ENCODE measurements at regions of chr6 and their contacts with region 1.

Region 1: DNA sequence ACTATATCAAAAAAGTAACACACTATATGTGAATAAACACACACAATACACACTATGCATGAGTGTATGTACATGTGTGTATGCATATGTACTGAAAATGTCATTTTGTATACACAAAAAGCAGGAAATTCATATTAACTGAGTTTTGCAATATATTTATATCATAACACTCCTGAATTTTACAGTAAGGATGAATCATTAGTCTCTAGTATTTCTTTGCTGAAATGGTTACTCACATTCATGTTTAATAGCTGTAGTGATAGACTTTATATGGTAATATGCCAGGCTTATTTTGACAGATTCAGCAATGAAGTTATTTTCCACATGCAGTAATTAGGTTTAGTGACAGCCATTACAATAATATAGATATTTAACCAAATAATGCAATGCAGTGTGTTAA is 1216.2 kb upstream of the CITED2 start:
- DNase-seq: no peak
- ATAC-seq: no peak
- H3K4me3 ChIP-seq: no peak overlapping the region
- H3K4me3 Mint-ChIP-seq: no peak overlapping the region
- H3K27ac ChIP-seq: no peak overlapping the region
- H3K27ac Mint-ChIP-seq: no peak overlapping the region
- H3K4me1 ChIP-seq: no peaks in the 10 kb centered on the region
- H3K4me1 Mint-ChIP-seq: no peaks in the 10 kb centered on the region
- H3K27me3 ChIP-seq: no peaks in the 10 kb centered on the region
- H3K27me3 Mint-ChIP-seq: no peaks in the 10 kb centered on the region
- CTCF ChIP-seq: no peak

Region 2: DNA sequence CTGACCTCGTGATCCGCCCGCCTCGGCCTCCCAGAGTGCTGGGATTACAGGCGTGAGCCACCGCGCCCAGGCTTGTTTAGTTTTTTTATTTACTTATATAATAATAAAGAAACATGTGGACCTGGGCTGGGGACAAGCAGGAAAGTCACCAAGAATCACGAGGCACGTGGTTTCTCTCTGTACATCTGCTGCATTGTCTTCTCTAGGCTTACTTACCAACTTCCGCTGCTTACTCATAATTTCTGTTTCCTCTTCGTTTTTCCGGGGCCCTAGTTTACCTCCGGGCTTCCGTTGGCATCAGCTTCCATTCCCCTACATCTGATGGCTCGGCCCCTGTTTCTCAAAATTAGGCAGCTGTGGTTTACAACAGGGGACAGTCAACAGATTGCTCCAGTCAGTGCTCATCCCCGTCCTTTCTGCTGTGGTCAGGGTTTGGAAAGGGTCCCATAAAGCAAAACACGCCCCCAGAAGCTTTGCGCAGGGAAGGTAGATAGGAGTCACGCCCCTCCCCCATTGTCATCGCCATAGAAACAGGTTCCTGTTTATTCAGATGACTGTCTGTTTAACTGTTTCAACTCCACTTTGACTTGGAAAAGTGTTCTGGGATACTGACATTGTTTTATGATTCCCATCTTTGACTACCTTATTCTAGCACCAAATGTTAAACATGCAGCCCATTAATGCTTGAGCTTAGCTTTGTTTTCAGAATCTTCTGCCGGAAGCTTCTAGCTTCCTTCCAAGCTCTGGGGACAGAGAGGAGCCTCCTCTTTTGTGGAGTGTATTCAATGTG is 1266.9 kb before region 1 on chr6:
- CTCF ChIA-PET with region 1: no interaction called
- POLR2A ChIA-PET with region 1: no interaction called
- intact Hi-C with region 1: no loop called
- DNase-seq: peak; percentile 88
- ATAC-seq: peak; percentile 74
- H3K4me3 ChIP-seq: peak overlapping the region; percentile 56 to 81 (median 67)
- H3K4me3 Mint-ChIP-seq: peak overlapping the region; percentile 92
- H3K27ac ChIP-seq: peak overlapping the region; percentile 83 to 92
- H3K27ac Mint-ChIP-seq: peak overlapping the region; percentile 98
- H3K4me1 ChIP-seq: peaks cover 30 to 42% of the 10 kb centered on the region in 2 donors
- H3K4me1 Mint-ChIP-seq: peaks cover 37% of the 10 kb centered on the region
- H3K27me3 ChIP-seq: no peaks in the 10 kb centered on the region
- H3K27me3 Mint-ChIP-seq: no peaks in the 10 kb centered on the region
- CTCF ChIP-seq: no peak

Region 3: GRCh38 chr6:139895205-139895793 is 695.3 kb before region 1 on chr6:
- CTCF ChIA-PET with region 1: no interaction called
- POLR2A ChIA-PET with region 1: no interaction called
- intact Hi-C with region 1: no loop called
- DNase-seq: no peak
- ATAC-seq: no peak
- H3K4me3 ChIP-seq: no peak overlapping the region
- H3K4me3 Mint-ChIP-seq: no peak overlapping the region
- H3K27ac ChIP-seq: no peak overlapping the region
- H3K27ac Mint-ChIP-seq: no peak overlapping the region
- H3K4me1 ChIP-seq: no peaks in the 10 kb centered on the region
- H3K4me1 Mint-ChIP-seq: no peaks in the 10 kb centered on the region
- H3K27me3 ChIP-seq: no peaks in the 10 kb centered on the region
- H3K27me3 Mint-ChIP-seq: peaks cover 10% of the 10 kb centered on the region
- CTCF ChIP-seq: no peak

Region 4: GRCh38 chr6:140566781-140567231 is 23.8 kb before region 1 on chr6:
- CTCF ChIA-PET with region 1: no interaction called
- POLR2A ChIA-PET with region 1: no interaction called
- intact Hi-C with region 1: no loop called
- DNase-seq: no peak
- ATAC-seq: no peak
- H3K4me3 ChIP-seq: no peak overlapping the region
- H3K4me3 Mint-ChIP-seq: no peak overlapping the region
- H3K27ac ChIP-seq: no peak overlapping the region
- H3K27ac Mint-ChIP-seq: no peak overlapping the region
- H3K4me1 ChIP-seq: no peaks in the 10 kb centered on the region
- H3K4me1 Mint-ChIP-seq: no peaks in the 10 kb centered on the region
- H3K27me3 ChIP-seq: no peaks in the 10 kb centered on the region
- H3K27me3 Mint-ChIP-seq: no peaks in the 10 kb centered on the region
- CTCF ChIP-seq: no peak

Region 5: DNA sequence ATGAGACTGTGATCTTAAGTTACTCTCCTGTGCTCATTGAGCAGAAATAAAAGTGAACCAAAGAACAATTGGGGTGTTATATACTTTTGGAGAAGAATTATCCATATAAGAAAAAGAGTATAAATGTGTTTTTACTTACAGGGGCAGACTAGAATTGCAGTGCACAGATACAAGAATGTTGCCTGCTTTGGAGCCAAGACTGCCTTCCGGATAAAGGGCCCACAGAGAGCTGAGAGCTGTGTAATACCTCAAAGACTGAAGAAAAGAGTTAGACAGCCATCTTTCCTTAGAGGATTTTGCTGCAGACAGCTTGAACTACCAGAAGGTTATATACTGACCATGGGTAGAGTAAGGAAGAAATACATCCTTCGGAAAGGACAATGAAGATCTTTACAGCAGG is 19.3 kb after region 1 on chr6:
- CTCF ChIA-PET with region 1: no interaction called
- POLR2A ChIA-PET with region 1: no interaction called
- intact Hi-C with region 1: loop called (anchors 2 kb)
- DNase-seq: no peak
- ATAC-seq: no peak
- H3K4me3 ChIP-seq: no peak overlapping the region
- H3K4me3 Mint-ChIP-seq: no peak overlapping the region
- H3K27ac ChIP-seq: no peak overlapping the region
- H3K27ac Mint-ChIP-seq: no peak overlapping the region
- H3K4me1 ChIP-seq: no peaks in the 10 kb centered on the region
- H3K4me1 Mint-ChIP-seq: no peaks in the 10 kb centered on the region
- H3K27me3 ChIP-seq: no peaks in the 10 kb centered on the region
- H3K27me3 Mint-ChIP-seq: no peaks in the 10 kb centered on the region
- CTCF ChIP-seq: no peak

Region 6: DNA sequence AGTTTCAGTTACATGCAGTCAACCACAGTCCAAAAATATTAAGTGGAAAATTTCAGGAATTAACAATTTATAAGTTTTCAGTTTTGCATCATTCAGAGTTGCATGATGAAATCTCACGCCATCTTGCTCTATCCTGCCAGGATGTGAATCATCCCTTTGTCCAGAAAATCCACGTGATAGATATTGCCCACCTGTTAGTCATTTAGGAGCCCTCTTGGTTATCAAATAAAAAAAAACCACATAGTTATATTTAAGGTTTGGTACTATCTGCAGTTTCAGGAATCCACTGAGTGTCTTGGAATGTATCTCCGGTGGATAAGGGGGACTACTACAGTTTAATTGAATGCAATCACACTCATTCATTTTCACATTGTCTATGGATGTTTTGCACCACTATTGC is 32.9 kb after region 1 on chr6:
- CTCF ChIA-PET with region 1: no interaction called
- POLR2A ChIA-PET with region 1: no interaction called
- intact Hi-C with region 1: loop called (anchors 1 kb)
- DNase-seq: no peak
- ATAC-seq: no peak
- H3K4me3 ChIP-seq: no peak overlapping the region
- H3K4me3 Mint-ChIP-seq: no peak overlapping the region
- H3K27ac ChIP-seq: no peak overlapping the region
- H3K27ac Mint-ChIP-seq: no peak overlapping the region
- H3K4me1 ChIP-seq: no peaks in the 10 kb centered on the region
- H3K4me1 Mint-ChIP-seq: no peaks in the 10 kb centered on the region
- H3K27me3 ChIP-seq: no peaks in the 10 kb centered on the region
- H3K27me3 Mint-ChIP-seq: no peaks in the 10 kb centered on the region
- CTCF ChIP-seq: no peak